ENCODE measurements at regions of chr13 and their contacts with region 1.

Region 1: DNA sequence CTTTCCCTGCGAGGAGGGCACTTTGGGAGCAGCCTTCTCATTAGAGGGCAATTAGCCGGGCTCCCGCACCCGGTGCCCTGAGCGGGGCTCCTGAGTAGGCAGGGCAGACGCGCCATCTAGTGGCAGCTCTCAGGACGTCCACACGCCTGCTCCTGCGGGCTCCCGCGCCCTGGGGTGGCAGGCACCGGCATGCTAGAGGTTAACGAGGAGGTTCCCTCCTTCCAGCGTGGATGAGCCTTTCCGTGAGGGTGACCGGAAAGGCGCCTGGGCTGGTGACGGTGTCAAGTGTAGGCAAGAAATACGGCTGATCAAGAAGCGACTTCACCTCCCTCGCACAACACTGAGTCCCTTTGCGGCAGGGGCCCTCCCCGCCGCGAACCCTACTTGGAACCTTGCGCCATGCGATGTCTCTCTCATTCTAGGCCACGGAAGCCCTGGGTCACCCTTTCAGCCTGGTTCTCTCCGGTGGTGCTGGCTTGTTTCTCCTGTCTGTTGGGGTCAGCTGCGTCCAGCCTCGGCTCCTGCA is 67.7 kb downstream of the ALOX5AP start:
- DNase-seq: peak; percentile 82
- H3K4me3 ChIP-seq: peak overlapping the region in 1 of 2 experiments; percentile 17; a peak in 1 of 4 replicates
- H3K27ac ChIP-seq: no peak overlapping the region
- H3K4me1 ChIP-seq: peaks cover 19 to 24% of the 10 kb centered on the region in 2 experiments
- H3K27me3 ChIP-seq: no peaks in the 10 kb centered on the region
- CTCF ChIP-seq: peak; percentile 89
- EP300 ChIP-seq: no peak
- RAD21 ChIP-seq: peak; percentile 95

Region 2: GRCh38 chr13:30673669-30674521 is 129.1 kb before region 1 on chr13:
- CTCF ChIA-PET with region 1: interaction called, 11 read pairs
- POLR2A ChIA-PET with region 1: no interaction called
- DNase-seq: peak; percentile 97
- H3K4me3 ChIP-seq: peak overlapping the region; percentile 52 to 59
- H3K27ac ChIP-seq: peak overlapping the region; percentile 37 to 58; a peak in 3 of 4 replicates
- H3K4me1 ChIP-seq: peaks cover 0 to 6% of the 10 kb centered on the region in 2 experiments; a peak in 1 of 4 replicates
- H3K27me3 ChIP-seq: no peaks in the 10 kb centered on the region
- CTCF ChIP-seq: peak; percentile 69
- EP300 ChIP-seq: peak in 1 of 2 experiments; percentile 38; a peak in 1 of 4 replicates
- RAD21 ChIP-seq: peak; percentile 53

Region 3: GRCh38 chr13:30792285-30793000 is 10.6 kb before region 1 on chr13:
- CTCF ChIA-PET with region 1: interaction called, 10 read pairs
- POLR2A ChIA-PET with region 1: interaction called, 5 read pairs
- DNase-seq: peak; percentile 75
- H3K4me3 ChIP-seq: 0 out of 4 replicates have a peak overlapping the region, but pooled peaks of 1 of the 2 experiments have one; percentile 1
- H3K27ac ChIP-seq: peak overlapping the region; percentile 70 to 93
- H3K4me1 ChIP-seq: peaks cover 32 to 42% of the 10 kb centered on the region in 2 experiments
- H3K27me3 ChIP-seq: no peaks in the 10 kb centered on the region
- CTCF ChIP-seq: peak; percentile 53
- EP300 ChIP-seq: peak; percentile 86 to 91; a peak in 3 of 4 replicates
- RAD21 ChIP-seq: peak; percentile 44

Measured in SK-N-SH (cell line).